H1 (cell line): ENCODE measurements at regions of chr15 and their contacts with region 1.

Region 1: GRCh38 chr15:72231066-72231846 is at the start of gene PKM:
- DNase-seq: peak; percentile 95 to 98
- H3K4me3 ChIP-seq: peak within 1 kb of the TSS; percentile 67 to 99 (median 92)
- H3K27ac ChIP-seq: peak within 1 kb of the TSS; percentile 74
- H3K4me1 ChIP-seq: peaks cover 3 to 25% (median 19%) of the 10 kb centered on the region in 4 experiments
- H3K27me3 ChIP-seq: peaks cover 2 to 32% (median 18%) of the 10 kb centered on the region in 4 experiments; a peak in 6 of 7 replicates
- CTCF ChIP-seq: no peak
- EP300 ChIP-seq: peak in 1 of 2 experiments; percentile 80; a peak in 2 of 3 replicates
- POLR2A ChIP-seq: peak; percentile 94 to 98
- RAD21 ChIP-seq: no peak
- total RNA-seq, gene PKM: 761 and 780 TPM in 2 replicates

Region 2: DNA sequence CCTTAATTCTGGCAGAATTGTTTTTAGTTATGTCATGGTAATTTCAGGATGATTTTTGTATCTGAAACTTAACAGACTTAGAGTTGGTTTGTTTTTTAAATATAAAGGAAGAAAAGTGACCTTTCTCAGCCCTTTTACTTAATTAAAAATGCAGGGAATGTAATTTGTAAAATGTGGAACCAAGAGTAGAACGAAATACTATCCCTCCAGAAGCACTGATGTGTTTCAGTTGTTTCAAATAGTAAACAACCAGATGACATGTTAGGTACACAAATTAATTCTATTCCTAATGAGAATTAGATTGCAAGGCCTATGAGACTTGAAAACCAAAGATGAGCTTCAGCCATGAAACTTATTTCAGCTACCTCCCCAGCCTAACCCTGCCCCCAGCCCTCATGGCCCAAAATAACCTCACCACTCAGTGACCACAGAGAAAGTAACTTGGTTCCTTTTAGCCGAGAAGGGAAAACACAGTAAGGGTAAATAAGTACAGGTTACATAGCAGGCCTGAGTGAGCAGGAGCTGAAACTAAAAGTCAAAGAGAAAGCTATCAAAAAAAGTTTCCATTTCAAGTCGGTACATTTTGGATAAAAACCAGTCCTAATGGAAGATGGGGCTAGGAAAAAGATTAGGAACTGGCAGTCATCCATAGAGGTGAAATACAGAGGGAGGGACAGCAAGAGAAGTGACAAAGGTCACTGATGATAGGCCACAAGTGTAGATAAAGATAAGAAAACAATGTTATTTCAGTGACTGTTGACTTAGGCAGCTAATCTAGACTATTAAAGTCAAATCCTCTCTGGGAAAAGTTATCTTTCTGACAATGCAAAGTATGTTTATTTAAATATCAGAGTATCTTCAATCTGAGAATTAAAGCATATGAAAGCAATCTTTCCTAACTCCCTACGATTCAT is 89.8 kb before region 1 on chr15:
- CTCF ChIA-PET with region 1: no interaction called
- POLR2A ChIA-PET with region 1: no interaction called
- DNase-seq: no peak
- H3K4me3 ChIP-seq: no peak overlapping the region
- H3K27ac ChIP-seq: no peak overlapping the region
- H3K4me1 ChIP-seq: no peaks in the 10 kb centered on the region
- H3K27me3 ChIP-seq: no peaks in the 10 kb centered on the region
- CTCF ChIP-seq: no peak
- EP300 ChIP-seq: no peak
- POLR2A ChIP-seq: no peak
- RAD21 ChIP-seq: no peak

Region 3: DNA sequence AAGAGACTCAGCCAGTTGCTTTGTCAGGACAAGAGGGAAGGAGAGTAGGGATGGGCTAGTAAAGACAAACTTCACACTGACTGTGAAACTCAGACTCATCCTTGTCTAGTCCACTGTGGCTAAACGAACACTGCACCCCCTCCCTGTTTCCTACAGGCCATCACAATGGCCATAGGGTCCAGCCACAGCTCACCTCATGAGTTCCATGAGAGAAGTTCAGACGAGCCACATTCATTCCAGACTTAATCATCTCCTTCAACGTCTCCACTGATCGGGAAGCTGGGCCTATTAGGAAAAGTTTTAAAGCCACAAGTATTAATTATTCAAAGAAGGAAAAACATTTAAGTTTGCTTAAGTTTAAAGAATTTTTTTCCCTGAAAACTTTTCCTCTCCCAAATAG is 14.0 kb before region 1 on chr15:
- CTCF ChIA-PET with region 1: interaction called, 21 read pairs
- POLR2A ChIA-PET with region 1: interaction called, 23 read pairs
- DNase-seq: no peak
- H3K4me3 ChIP-seq: no peak overlapping the region
- H3K27ac ChIP-seq: no peak overlapping the region
- H3K4me1 ChIP-seq: no peaks in the 10 kb centered on the region
- H3K27me3 ChIP-seq: no peaks in the 10 kb centered on the region
- CTCF ChIP-seq: no peak
- EP300 ChIP-seq: no peak
- POLR2A ChIP-seq: no peak
- RAD21 ChIP-seq: no peak

Region 4: GRCh38 chr15:72242775-72243370 is 11.6 kb after region 1 on chr15:
- CTCF ChIA-PET with region 1: interaction called, 29 read pairs
- POLR2A ChIA-PET with region 1: interaction called, 66 read pairs
- DNase-seq: no peak
- H3K4me3 ChIP-seq: no peak overlapping the region
- H3K27ac ChIP-seq: no peak overlapping the region
- H3K4me1 ChIP-seq: peaks cover 0 to 7% (median 0%) of the 10 kb centered on the region in 4 experiments; a peak in 2 of 7 replicates
- H3K27me3 ChIP-seq: peaks cover 25 to 65% (median 51%) of the 10 kb centered on the region in 4 experiments
- CTCF ChIP-seq: no peak
- EP300 ChIP-seq: peak in 1 of 2 experiments; percentile 53; a peak in 1 of 3 replicates
- POLR2A ChIP-seq: no peak
- RAD21 ChIP-seq: no peak

Region 5: GRCh38 chr15:72375847-72376581 is 144.8 kb after region 1 on chr15 and contains the start of gene HEXA:
- CTCF ChIA-PET with region 1: no interaction called
- POLR2A ChIA-PET with region 1: no interaction called
- DNase-seq: peak; percentile 94 to 100
- H3K4me3 ChIP-seq: peak within 1 kb of the TSS; percentile 84 to 99 (median 91)
- H3K27ac ChIP-seq: peak within 1 kb of the TSS; percentile 66
- H3K4me1 ChIP-seq: peaks cover 0 to 4% (median 0%) of the 10 kb centered on the region in 4 experiments; a peak in 2 of 7 replicates
- H3K27me3 ChIP-seq: no peaks in the 10 kb centered on the region
- CTCF ChIP-seq: no peak
- EP300 ChIP-seq: peak in 1 of 2 experiments; percentile 96; a peak in 2 of 3 replicates
- POLR2A ChIP-seq: peak; percentile 93 to 98
- RAD21 ChIP-seq: peak in 1 of 2 experiments; percentile 21; a peak in 3 of 4 replicates
- total RNA-seq, gene HEXA: 47.4 and 52.5 TPM in 2 replicates